Gastrocnemius medialis (tissue), 4 donors: ENCODE measurements at regions of chr4 and their contacts with region 1.

Region 1: GRCh38 chr4:77209936-77210335 is 52.9 kb downstream of the CCNG2 start:
- DNase-seq: no peak
- ATAC-seq: no peak
- H3K4me3 ChIP-seq: no peak overlapping the region
- H3K27ac ChIP-seq: no peak overlapping the region
- H3K4me1 ChIP-seq: no peaks in the 10 kb centered on the region
- H3K27me3 ChIP-seq: no peaks in the 10 kb centered on the region
- CTCF ChIP-seq: no peak
- POLR2A ChIP-seq: no peak

Region 2: GRCh38 chr4:77095101-77095821 is 114.7 kb before region 1 on chr4:
- in situ Hi-C with region 1: loop called in 2 of 4 experiments (anchors 10 kb)
- intact Hi-C with region 1: no loop called
- DNase-seq: peak; percentile 54 to 72
- ATAC-seq: peak; percentile 82 to 96
- H3K4me3 ChIP-seq: no peak overlapping the region
- H3K27ac ChIP-seq: no peak overlapping the region
- H3K4me1 ChIP-seq: peaks cover 0 to 10% of the 10 kb centered on the region in 2 donors
- H3K27me3 ChIP-seq: no peaks in the 10 kb centered on the region
- CTCF ChIP-seq: peak; percentile 72 to 85 (median 78)
- POLR2A ChIP-seq: no peak